PC-9 (cell line): ENCODE measurements at regions of chr19 and their contacts with region 1.

Region 1: DNA sequence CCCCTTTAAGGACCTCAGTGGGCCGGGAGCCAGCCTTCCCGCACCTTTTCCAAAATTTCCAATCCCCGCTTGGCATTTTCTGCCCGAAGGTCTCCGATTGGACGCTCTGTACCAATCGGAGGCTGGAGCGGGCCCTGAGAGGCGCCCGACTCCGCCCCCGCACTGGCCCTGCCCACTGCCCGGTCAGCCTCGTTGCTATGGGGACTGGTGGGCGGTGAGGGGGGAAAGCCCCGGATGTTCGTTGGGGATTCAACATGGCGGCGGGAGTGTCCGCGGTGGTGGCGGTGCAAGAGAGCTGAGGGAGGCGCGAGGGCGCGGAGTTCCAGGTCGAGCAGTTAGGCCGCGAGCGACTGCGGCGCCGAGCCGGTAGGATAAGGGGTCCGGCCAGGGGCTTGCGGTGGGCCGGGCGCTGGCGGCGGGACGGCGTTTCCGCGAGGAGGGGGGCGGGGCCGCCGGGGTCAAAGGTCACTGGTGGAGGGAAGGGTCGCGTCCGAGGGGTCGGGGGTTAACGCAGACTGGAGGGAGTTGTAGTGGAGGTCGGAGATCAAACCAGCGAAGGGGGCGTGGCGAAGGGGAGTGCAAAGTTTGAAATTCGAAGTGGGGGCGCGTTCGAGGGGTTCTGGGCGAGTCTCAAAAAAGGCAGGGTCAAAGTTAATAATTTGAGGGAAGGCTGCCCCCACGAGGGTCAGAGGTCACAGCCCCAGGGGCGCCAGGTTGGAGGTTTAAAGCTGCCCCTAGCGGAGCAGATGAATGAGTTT is at the start of gene PAK4:
- DNase-seq: peak; percentile 92 to 97
- H3K4me3 ChIP-seq: peak within 1 kb of the TSS; percentile 80
- H3K27ac ChIP-seq: peak within 1 kb of the TSS; percentile 27; the same call in 1 of the 2 replicates
- H3K4me1 ChIP-seq: peaks cover 9% of the 10 kb centered on the region
- H3K27me3 ChIP-seq: no peaks in the 10 kb centered on the region
- CTCF ChIP-seq: no peak
- total RNA-seq, gene PAK4: 77.8 and 90.2 TPM in 2 replicates

Region 2: DNA sequence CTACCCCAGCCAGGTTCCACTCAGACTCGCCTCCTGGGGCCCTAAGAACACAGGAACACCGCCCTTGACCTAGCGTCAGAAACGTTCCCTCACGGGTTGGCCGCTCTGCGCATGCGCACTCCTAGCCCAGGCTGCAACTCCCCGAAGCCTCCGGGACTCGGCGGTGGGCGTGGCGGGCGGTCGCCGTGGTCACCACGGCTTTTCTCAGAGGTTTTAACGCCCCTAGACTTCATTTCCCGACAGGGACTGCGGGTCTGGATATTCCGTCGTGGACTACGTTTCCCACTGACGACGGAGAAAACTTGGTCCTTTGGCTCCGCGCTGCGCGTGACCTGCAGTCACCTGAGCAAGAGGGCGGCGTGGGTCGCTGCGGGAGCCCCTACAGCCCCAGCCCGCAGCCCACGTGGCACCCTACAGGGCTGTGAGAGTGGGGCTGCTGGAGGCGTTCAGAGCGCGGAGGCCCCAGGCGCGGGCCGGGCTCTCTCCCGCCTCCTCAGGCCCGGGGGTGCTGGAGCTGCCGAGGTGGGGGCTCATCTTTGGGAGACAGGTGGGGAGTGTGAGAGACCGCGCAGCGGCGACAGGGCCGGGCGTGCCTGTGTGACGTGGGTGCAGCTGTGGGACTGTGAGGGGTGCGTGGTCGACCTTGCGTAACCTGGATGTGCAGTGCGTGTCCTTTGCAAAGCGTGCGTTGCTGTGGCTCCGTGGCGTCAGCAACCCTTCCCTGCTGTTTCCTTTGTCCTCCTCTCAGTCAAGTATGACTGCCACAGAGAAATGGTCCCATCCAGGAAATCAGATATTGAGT is 1308.4 kb before region 1 on chr19:
- CTCF ChIA-PET with region 1: no interaction called
- POLR2A ChIA-PET with region 1: no interaction called
- intact Hi-C with region 1: no loop called
- DNase-seq: no peak
- H3K4me3 ChIP-seq: no peak overlapping the region
- H3K27ac ChIP-seq: no peak overlapping the region
- H3K4me1 ChIP-seq: no peaks in the 10 kb centered on the region
- H3K27me3 ChIP-seq: 0 out of 2 replicates have a peak, but pooled peaks cover 4% of the 10 kb centered on the region
- CTCF ChIP-seq: no peak

Region 3: DNA sequence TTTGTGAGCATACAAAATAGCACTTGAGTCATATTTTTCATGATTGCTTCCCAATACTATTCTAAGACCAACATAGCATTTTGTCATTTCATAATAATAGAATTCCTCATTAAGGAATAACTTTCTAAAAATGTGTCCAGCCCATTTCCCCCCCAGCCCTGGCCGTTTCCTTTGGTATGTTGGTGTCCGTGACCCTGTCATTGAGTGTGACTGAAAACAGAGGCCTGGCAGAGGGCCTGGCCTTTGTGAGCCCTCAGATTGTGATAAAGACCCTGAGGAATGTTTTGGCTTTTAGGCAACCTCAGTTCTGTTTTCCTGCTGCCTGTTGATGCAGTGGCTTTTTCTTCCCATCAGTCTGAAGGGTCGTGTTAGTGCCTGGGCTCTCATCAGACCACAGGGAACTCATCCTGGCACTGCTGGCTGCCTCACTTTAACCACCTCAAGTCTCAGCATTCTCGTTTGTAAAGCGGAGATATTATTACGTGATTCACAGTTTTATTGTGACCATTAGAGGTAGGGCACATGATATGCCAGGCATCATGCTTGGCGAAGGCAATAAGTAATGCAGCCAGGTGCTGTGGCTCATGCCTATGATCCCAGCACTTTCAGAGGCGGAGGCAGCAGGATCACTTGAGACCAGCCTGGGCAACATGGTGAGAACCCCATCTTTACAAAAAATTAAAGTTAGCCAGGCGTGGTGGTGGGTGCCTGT is 847.6 kb before region 1 on chr19:
- CTCF ChIA-PET with region 1: interaction called, 12 read pairs
- POLR2A ChIA-PET with region 1: no interaction called
- intact Hi-C with region 1: no loop called
- DNase-seq: peak; percentile 38 to 78
- H3K4me3 ChIP-seq: peak overlapping the region; percentile 39
- H3K27ac ChIP-seq: peak overlapping the region; percentile 75
- H3K4me1 ChIP-seq: peaks cover 64% of the 10 kb centered on the region
- H3K27me3 ChIP-seq: no peaks in the 10 kb centered on the region
- CTCF ChIP-seq: no peak

Region 4: DNA sequence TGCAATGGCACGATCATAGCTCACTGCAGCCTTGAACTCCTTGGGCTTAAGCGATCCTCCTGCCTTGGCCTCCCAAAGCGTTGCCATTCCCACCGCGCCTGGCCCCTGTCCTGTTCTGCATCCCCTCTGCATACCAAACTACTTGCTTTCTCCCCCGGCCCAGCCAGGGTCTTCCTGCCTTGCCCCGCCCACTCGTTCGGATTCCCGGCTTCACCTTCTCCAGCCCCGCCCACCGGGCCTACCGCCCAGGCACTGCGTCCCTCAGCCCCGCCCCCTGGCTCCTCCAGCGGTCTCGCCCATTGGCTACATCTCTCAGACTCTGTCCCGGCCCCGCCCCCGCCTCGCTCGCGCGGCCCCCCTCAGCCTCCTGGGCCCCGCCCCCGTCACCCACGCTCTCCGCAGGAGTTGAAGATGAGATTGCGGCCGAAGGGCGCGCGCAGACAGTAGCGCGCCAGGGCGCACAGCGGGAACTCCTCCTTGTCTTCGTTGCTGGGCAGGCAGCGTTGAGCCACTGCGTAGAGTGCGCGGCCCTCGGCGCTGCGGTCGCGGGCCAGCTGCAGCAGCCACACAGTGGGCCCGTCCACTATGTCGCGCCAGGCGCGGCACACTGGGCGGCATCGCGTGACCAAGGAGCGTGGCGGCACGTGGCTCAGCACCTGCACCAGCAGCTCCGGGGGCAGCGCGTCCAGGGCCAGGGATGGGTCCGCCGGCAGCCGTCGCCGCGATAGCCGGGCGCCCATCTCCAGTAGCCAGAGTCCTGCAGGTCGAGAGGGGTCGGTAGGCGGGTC is 176.0 kb before region 1 on chr19:
- CTCF ChIA-PET with region 1: no interaction called
- POLR2A ChIA-PET with region 1: no interaction called
- intact Hi-C with region 1: no loop called
- DNase-seq: peak; percentile 64 to 91
- H3K4me3 ChIP-seq: peak overlapping the region; percentile 50; the same call in 1 of the 2 replicates
- H3K27ac ChIP-seq: no peak overlapping the region
- H3K4me1 ChIP-seq: no peaks in the 10 kb centered on the region
- H3K27me3 ChIP-seq: no peaks in the 10 kb centered on the region
- CTCF ChIP-seq: no peak

Region 5: DNA sequence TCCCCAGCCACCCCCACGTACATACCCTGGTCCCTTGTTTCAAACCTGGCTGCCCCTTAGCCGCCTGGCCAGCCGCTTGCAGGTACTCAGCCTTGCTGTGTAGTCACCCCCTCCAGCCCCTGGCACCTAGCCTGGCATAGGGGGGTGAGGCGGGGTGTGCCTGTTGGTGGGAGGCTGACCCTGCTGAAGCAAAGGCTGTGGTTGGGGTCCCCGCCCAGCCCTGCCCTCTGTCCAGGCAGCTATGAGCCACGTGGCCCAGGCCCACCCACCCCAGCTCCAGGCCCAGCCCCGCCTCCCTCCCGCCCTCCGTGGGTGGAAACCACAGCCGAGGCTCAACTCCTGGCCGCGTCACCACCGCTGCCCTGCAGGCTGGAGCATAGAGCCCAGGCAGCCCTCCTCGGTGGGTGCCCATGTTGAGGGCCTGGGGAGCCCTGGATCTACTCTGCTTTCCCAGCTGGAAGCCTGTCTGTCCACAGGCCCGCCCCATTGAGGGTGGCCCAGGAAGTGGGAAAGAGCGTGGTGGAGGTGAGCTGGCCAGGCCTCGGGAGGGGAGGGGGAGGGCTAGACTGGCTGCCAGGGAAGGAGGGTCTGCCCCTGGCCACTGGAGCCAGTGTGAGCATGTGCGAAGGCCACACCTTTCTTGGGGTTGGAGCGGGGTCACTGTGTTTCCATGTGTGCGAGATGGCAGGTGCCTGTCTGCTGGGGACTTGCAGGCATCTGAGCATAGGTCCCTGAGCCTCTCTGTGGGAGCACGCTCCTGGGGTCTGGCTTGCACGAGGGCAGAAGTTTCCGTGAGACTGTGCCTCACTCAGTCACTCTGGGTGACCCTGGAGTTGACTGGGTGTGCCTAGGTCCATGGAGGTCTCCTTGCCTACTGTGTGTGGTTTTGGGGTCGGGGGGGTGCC is 30.8 kb after region 1 on chr19:
- CTCF ChIA-PET with region 1: no interaction called
- POLR2A ChIA-PET with region 1: interaction called, 10 read pairs
- intact Hi-C with region 1: loop called (anchors 1 kb)
- DNase-seq: peak in 1 of 2 experiments; percentile 43
- H3K4me3 ChIP-seq: no peak overlapping the region
- H3K27ac ChIP-seq: no peak overlapping the region
- H3K4me1 ChIP-seq: peaks cover 43% of the 10 kb centered on the region
- H3K27me3 ChIP-seq: no peaks in the 10 kb centered on the region
- CTCF ChIP-seq: no peak

Region 6: DNA sequence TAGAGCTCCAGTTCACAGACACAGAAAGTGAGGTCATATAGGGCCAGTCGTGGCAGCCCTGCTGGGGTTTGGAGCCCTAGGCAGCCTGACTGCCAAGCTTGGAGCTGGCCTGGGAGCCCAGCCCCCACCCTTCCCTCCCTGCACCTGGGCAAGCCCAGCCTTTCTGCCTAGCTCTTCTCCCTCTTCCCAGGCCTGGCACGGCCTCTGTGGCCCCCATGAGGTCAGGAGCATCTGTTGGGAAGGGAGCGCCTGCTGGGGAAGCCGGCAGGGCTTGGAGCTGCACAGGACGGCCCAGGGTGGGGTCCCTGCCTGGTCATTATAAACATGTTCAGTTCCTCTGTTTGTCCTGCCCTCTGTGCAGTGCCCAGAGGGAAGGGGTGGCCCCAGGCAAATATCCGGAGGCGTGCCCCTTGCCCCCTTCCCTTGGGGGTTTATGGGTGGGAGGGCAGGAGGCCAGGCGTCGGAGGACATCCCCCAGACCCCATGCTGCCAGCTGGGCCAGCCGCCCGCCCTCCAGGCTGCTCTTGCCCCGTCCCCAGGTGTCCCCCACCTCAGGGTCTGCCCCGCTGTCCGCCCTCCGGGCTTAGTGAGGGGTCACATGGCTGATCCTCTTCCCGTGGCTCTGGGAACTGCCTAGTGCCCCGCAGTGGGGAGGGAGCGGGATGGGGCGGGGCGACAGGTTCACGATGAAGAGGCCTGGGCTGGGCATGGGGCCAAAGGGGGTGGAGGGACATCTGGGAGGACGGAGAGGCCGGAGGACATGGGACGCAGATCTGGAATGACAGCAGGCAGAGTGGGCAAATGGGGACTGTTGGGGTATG is 41.0 kb after region 1 on chr19:
- CTCF ChIA-PET with region 1: no interaction called
- POLR2A ChIA-PET with region 1: no interaction called
- intact Hi-C with region 1: loop called (anchors 1 kb)
- DNase-seq: peak; percentile 67 to 90
- H3K4me3 ChIP-seq: peak overlapping the region; percentile 53
- H3K27ac ChIP-seq: peak overlapping the region; percentile 71
- H3K4me1 ChIP-seq: peaks cover 29% of the 10 kb centered on the region
- H3K27me3 ChIP-seq: no peaks in the 10 kb centered on the region
- CTCF ChIP-seq: no peak

Region 7: DNA sequence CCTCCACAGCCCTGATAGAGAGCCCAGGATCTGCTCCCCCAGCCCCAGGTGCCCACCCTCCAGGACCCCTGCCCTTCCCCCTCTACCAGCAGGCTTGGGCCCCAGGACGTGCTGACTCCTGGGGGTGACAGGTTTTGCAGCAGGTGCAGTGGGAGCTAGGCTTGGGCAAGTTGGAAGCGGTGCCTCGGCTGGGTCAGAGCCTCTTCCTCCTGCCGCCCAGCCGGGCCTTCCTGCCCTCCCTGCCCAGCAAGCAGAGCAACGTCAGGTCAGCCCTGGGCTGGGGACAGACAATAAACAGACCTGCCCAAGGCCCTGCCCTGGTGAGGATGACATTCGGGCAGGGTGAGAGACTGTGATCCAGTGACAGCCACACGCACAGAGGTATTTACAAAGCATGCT is 61.8 kb after region 1 on chr19:
- CTCF ChIA-PET with region 1: no interaction called
- POLR2A ChIA-PET with region 1: no interaction called
- intact Hi-C with region 1: loop called (anchors 2 kb)
- DNase-seq: no peak
- H3K4me3 ChIP-seq: no peak overlapping the region
- H3K27ac ChIP-seq: no peak overlapping the region
- H3K4me1 ChIP-seq: no peaks in the 10 kb centered on the region
- H3K27me3 ChIP-seq: no peaks in the 10 kb centered on the region
- CTCF ChIP-seq: peak; percentile 72

Region 8: DNA sequence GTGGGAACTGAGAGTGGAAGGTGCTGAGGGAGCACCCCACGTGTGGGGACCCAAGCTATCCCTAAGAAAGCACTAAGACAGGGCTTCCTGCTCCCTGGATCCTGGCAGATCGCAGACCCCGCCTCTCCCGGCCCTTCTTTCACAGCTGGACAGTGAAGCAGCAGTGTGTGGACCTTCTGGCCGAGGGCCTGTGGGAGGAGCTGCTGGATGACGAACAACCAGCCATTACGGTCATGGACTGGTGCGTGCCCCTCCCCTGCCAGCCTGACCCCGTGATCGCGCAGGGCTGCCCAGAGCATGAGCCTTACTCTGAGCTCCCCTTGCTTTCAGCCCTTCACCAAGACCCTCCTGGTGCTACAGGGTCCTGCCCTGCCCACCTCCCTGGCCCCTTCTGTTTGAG is 73.3 kb after region 1 on chr19:
- CTCF ChIA-PET with region 1: interaction called, 3 read pairs
- POLR2A ChIA-PET with region 1: no interaction called
- intact Hi-C with region 1: loop called (anchors 2 kb)
- DNase-seq: no peak
- H3K4me3 ChIP-seq: no peak overlapping the region
- H3K27ac ChIP-seq: no peak overlapping the region
- H3K4me1 ChIP-seq: peaks cover 48% of the 10 kb centered on the region
- H3K27me3 ChIP-seq: no peaks in the 10 kb centered on the region
- CTCF ChIP-seq: no peak

Region 9: DNA sequence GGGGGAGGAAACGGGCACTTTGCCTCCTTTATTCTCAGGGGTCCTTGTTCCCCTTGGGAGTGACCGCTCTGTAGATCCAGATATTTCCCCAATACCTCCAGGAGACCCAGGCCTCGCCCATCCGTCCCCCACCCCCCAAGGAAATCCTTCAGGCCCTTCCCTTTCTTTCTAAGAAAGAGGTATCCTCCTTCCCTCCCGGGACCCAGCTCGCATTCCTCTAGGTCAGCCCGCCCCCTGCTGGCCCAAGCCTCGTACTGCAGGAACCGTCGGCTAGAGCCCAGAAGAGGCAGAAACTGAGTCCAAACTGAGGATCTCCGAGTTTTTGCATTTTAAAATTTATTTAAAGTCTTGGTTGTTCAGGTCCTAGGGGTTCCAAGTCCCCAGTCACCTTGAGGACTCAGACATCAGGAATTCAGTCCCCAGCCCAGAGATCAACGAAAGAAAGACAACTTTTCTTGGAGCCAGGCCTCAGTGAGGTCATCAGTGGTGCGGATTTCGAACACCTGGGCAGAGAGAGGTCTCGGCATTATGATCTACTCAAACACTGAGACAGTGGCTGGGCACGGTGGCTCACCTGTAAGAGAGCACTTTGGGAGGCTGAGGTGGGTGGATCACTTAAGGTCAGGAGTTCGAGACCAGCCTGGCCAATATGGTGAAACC is 202.4 kb after region 1 on chr19:
- CTCF ChIA-PET with region 1: interaction called, 7 read pairs
- POLR2A ChIA-PET with region 1: no interaction called
- intact Hi-C with region 1: loop called (anchors 1 kb)
- DNase-seq: peak; percentile 38 to 81
- H3K4me3 ChIP-seq: no peak overlapping the region
- H3K27ac ChIP-seq: no peak overlapping the region
- H3K4me1 ChIP-seq: no peaks in the 10 kb centered on the region
- H3K27me3 ChIP-seq: no peaks in the 10 kb centered on the region
- CTCF ChIP-seq: peak; percentile 97